ENCODE measurements at regions of chr1 and their contacts with region 1.

Region 1: GRCh38 chr1:231211005-231211857 is 29.8 kb upstream of the GNPAT start:
- H3K4me3 ChIP-seq: peak overlapping the region; percentile 15
- H3K27ac ChIP-seq: no peak overlapping the region
- H3K4me1 ChIP-seq: no peaks in the 10 kb centered on the region
- CTCF ChIP-seq: peak; percentile 98

Region 2: GRCh38 chr1:230797942-230798418 is 413.3 kb before region 1 on chr1:
- CTCF ChIA-PET with region 1: interaction called, 45 read pairs
- POLR2A ChIA-PET with region 1: no interaction called
- H3K4me3 ChIP-seq: no peak overlapping the region
- H3K27ac ChIP-seq: no peak overlapping the region
- H3K4me1 ChIP-seq: no peaks in the 10 kb centered on the region
- CTCF ChIP-seq: peak; percentile 87

Region 3: GRCh38 chr1:231016234-231016633 is 195.0 kb before region 1 on chr1:
- CTCF ChIA-PET with region 1: interaction called, 14 read pairs
- POLR2A ChIA-PET with region 1: interaction called, 3 read pairs
- H3K4me3 ChIP-seq: no peak overlapping the region
- H3K27ac ChIP-seq: no peak overlapping the region
- H3K4me1 ChIP-seq: no peaks in the 10 kb centered on the region
- CTCF ChIP-seq: no peak

Region 4: DNA sequence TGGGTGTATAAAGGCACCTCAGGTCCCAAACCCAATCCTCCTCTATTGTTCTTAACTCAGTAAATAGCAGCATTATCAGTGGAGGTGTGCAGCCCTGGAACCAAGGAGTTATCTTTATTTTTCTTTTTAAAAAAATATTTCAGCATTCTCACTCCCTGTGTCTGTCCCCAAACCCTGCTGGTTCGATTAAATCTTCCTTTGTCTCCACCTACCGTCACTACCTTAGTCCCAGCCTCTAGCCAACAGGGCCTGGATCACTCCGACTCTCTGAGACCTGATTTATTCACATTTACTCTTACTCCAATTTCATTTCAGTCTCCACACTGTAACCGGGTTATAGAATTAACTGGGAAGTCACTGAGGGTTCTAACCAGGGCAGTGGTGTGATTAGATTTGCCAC is 132.1 kb before region 1 on chr1:
- CTCF ChIA-PET with region 1: no interaction called
- POLR2A ChIA-PET with region 1: no interaction called
- H3K4me3 ChIP-seq: no peak overlapping the region
- H3K27ac ChIP-seq: no peak overlapping the region
- H3K4me1 ChIP-seq: no peaks in the 10 kb centered on the region
- CTCF ChIP-seq: no peak

Region 5: DNA sequence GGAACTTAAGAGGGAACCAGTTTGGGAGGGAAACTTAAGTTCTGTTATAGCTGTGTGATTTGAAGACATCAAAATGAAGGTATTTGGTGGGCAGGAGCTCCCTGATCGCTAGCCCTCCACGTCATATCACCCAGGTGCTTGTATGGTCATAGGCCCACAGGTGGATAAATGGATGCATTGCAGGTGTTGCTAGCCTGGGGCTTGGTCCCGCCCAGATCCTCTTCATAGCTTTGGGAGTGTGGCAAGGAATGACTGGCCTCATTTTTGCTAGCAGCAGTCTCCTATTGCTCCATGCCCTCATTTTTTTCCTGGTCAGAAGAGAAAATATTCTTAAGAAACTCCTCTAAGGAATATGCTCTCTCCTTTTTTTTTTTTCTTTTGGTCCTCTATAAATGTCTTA is 41.1 kb after region 1 on chr1:
- CTCF ChIA-PET with region 1: no interaction called
- POLR2A ChIA-PET with region 1: no interaction called
- H3K4me3 ChIP-seq: no peak overlapping the region
- H3K27ac ChIP-seq: no peak overlapping the region
- H3K4me1 ChIP-seq: no peaks in the 10 kb centered on the region
- CTCF ChIP-seq: no peak

Measured in HEK293 (cell line).